HepG2 (cell line): ENCODE measurements at regions of chr17 and their contacts with region 1.

Region 1: GRCh38 chr17:75904749-75905521 is at the start of gene MRPL38:
- DNase-seq: peak; percentile 95
- ATAC-seq: peak; percentile 97
- H3K4me3 ChIP-seq: peak within 1 kb of the TSS; percentile 95 to 100 (median 97)
- H3K27ac ChIP-seq: peak within 1 kb of the TSS; percentile 76
- H3K4me1 ChIP-seq: peaks cover 38% of the 10 kb centered on the region
- H3K27me3 ChIP-seq: no peaks in the 10 kb centered on the region; a peak in 1 of 5 replicates
- CTCF ChIP-seq: peak; percentile 100
- EP300 ChIP-seq: peak in 1 of 2 experiments; percentile 58; a peak in 2 of 4 replicates
- POLR2A ChIP-seq: peak; percentile 75 to 86
- RAD21 ChIP-seq: peak; percentile 100
- total RNA-seq, gene MRPL38: 88.8 and 125 TPM in 2 replicates

Region 2: GRCh38 chr17:75920045-75920560 is 15.2 kb after region 1 on chr17:
- CTCF ChIA-PET with region 1: interaction called, 4 read pairs
- POLR2A ChIA-PET with region 1: interaction called, 21 read pairs
- in situ Hi-C with region 1: no loop called
- intact Hi-C with region 1: no loop called
- DNase-seq: no peak
- ATAC-seq: no peak
- H3K4me3 ChIP-seq: no peak overlapping the region
- H3K27ac ChIP-seq: no peak overlapping the region
- H3K4me1 ChIP-seq: peaks cover 39% of the 10 kb centered on the region
- H3K27me3 ChIP-seq: no peaks in the 10 kb centered on the region
- CTCF ChIP-seq: no peak
- EP300 ChIP-seq: no peak
- POLR2A ChIP-seq: no peak
- RAD21 ChIP-seq: no peak

Region 3: DNA sequence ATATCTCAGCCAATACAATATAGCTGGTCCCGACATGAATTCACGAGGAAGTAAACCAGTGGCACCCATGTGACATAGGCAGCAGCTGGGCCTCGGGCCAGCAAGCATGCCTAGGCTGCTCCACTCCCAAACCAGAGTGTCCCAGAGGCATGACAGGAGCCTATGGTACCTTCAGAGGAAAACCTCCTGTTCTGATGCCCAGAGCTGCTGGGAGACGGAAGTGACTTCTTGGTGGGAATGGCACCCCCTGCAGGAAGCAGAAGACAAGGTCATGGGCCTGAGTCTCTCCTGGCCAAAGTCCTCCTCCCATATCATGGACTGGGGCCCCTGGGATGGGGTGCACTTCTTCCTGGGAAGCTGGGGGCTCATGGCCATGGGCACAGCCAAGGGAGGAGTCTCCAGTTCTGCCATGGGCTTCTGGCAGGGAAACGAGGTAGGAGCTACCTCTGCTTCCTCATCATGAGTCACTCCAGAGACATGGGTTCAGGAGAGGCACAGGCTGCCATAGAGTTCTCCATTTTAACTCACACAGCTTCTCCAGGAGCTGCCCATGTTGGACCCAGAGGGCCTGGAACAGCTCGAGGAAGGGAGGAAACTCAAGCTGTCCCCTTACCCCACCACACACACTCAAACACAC is 22.5 kb after region 1 on chr17:
- CTCF ChIA-PET with region 1: interaction called, 15 read pairs
- POLR2A ChIA-PET with region 1: interaction called, 21 read pairs
- in situ Hi-C with region 1: no loop called
- intact Hi-C with region 1: loop called (anchors 1 kb)
- DNase-seq: peak; percentile 52
- ATAC-seq: peak; percentile 63
- H3K4me3 ChIP-seq: no peak overlapping the region
- H3K27ac ChIP-seq: no peak overlapping the region
- H3K4me1 ChIP-seq: peaks cover 35% of the 10 kb centered on the region
- H3K27me3 ChIP-seq: no peaks in the 10 kb centered on the region
- CTCF ChIP-seq: peak; percentile 73
- EP300 ChIP-seq: no peak
- POLR2A ChIP-seq: no peak
- RAD21 ChIP-seq: peak; percentile 51

Region 4: GRCh38 chr17:75950821-75951554 is 46.1 kb after region 1 on chr17:
- CTCF ChIA-PET with region 1: no interaction called
- POLR2A ChIA-PET with region 1: no interaction called
- in situ Hi-C with region 1: no loop called
- intact Hi-C with region 1: no loop called
- DNase-seq: no peak
- ATAC-seq: no peak
- H3K4me3 ChIP-seq: no peak overlapping the region
- H3K27ac ChIP-seq: no peak overlapping the region
- H3K4me1 ChIP-seq: no peaks in the 10 kb centered on the region
- H3K27me3 ChIP-seq: no peaks in the 10 kb centered on the region
- CTCF ChIP-seq: no peak
- EP300 ChIP-seq: no peak
- POLR2A ChIP-seq: 0 out of 4 replicates have a peak, but pooled peaks of 1 of the 2 experiments have one; percentile 18
- RAD21 ChIP-seq: no peak